ENCODE measurements at regions of chr2 and their contacts with region 1.

Region 1: GRCh38 chr2:11465497-11466406 is at the start of gene E2F6:
- DNase-seq: peak; percentile 92
- ATAC-seq: peak; percentile 85
- H3K4me3 Mint-ChIP-seq: peak within 1 kb of the TSS; percentile 81
- H3K27ac Mint-ChIP-seq: peak within 1 kb of the TSS; percentile 92
- H3K4me1 Mint-ChIP-seq: peaks cover 33% of the 10 kb centered on the region
- H3K27me3 Mint-ChIP-seq: no peaks in the 10 kb centered on the region
- total RNA-seq, gene E2F6: 7.2 to 10.6 TPM

Region 2: DNA sequence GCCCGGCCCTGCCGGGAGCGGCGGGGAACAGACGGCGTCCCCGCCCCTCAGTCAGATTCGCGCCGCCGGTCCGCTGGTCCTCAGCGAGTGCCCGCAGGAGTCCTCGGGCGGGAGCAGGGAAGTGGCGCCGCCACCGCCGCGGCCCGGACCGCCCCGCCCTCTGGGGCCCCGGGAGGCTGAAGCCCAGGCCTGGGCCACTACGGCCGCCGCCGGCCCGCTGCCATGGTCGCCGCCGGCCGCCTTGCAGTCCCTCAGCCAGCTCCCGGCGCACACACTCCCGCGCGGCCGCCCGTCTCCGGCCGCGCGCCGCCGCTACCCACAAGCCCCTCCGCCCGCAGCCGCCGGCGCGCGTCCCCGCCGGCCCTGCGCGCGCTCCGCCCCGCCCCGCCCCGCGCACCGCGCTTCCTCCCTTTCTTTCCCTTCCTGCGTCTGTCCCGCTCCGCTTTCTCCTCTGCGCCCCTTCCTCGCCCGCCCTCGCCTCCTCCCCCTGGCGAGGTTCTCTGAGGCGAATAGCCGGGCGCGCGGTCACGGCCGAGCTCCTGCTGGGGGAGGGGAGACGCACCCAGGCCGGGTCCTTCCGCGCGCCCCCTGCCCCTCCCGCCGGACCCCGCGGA is 121.3 kb before region 1 on chr2 and contains the start of gene ROCK2:
- CTCF ChIA-PET with region 1: no interaction called
- POLR2A ChIA-PET with region 1: no interaction called
- intact Hi-C with region 1: loop called (anchors 1 to 5 kb)
- DNase-seq: peak; percentile 81
- ATAC-seq: peak; percentile 68
- H3K4me3 Mint-ChIP-seq: peak within 1 kb of the TSS; percentile 97
- H3K27ac Mint-ChIP-seq: peak within 1 kb of the TSS; percentile 89
- H3K4me1 Mint-ChIP-seq: peaks cover 31% of the 10 kb centered on the region
- H3K27me3 Mint-ChIP-seq: no peaks in the 10 kb centered on the region
- total RNA-seq, gene ROCK2: 14.4 to 16.7 TPM

Measured in activated CD4-positive, alpha-beta T cell treated with anti-CD3 and anti-CD28 coated beads for 36 hours (primary cell).